Adrenal gland (tissue), 19 donors: ENCODE measurements at regions of chrX and their contacts with region 1.

Region 1: DNA sequence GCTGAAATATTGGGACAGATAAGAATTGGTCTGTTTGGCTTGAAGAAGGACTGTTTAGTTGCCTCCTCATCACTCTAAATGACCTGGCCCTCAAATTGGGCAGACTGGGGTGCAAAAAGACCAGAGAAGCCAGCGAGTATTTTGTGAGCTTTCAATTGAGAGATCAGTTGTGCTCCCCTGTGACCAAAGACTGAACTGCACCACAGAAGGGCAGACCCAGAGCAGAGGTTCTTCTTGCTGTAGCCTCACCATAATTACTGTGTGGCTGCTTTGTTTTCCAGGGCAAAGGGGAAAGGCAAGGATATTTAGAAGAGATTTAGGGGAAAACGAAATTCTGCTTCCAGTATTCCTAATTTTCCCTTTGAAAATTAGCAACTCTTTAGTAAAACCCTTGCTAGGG is 104.0 kb upstream of the MBNL3 start:
- DNase-seq: peak; percentile 17 to 56 (median 28)
- H3K4me3 ChIP-seq: no peak overlapping the region
- H3K27ac ChIP-seq: no peak overlapping the region
- H3K4me1 ChIP-seq: no peaks in the 10 kb centered on the region
- H3K27me3 ChIP-seq: peaks cover 10% of the 10 kb centered on the region
- CTCF ChIP-seq: peak; percentile 30 to 65 (median 55)
- POLR2A ChIP-seq: no peak

Region 2: GRCh38 chrX:132488819-132489577 is 103.9 kb before region 1 on chrX and contains the start of gene MBNL3:
- intact Hi-C with region 1: loop called in 1 of 2 experiments (anchors 10 kb)
- DNase-seq: peak; percentile 73 to 81 (median 75)
- H3K4me3 ChIP-seq: peak within 1 kb of the TSS; percentile 14 to 71 (median 44)
- H3K27ac ChIP-seq: peak within 1 kb of the TSS; percentile 30 to 89 (median 84)
- H3K4me1 ChIP-seq: peaks cover 0 to 24% of the 10 kb centered on the region in 2 donors
- H3K27me3 ChIP-seq: peaks cover 3% of the 10 kb centered on the region
- CTCF ChIP-seq: no peak
- POLR2A ChIP-seq: peak in 1 of 2 donors; percentile 18
- total RNA-seq, gene MBNL3: 38.4 to 166 (median 62.0) TPM